PC-3 (cell line): ENCODE measurements at regions of chr13 and their contacts with region 1.

Region 1: GRCh38 chr13:96086736-96087135 is 3.2 kb upstream of the HS6ST3 start:
- DNase-seq: no peak
- ATAC-seq: no peak
- H3K4me3 ChIP-seq: no peak overlapping the region
- H3K27ac ChIP-seq: no peak overlapping the region
- H3K4me1 ChIP-seq: 0 out of 2 replicates have a peak, but pooled peaks cover 4% of the 10 kb centered on the region
- H3K27me3 ChIP-seq: peaks cover 39% of the 10 kb centered on the region
- CTCF ChIP-seq: no peak

Region 2: GRCh38 chr13:95627590-95627989 is 459.1 kb before region 1 on chr13:
- CTCF ChIA-PET with region 1: no interaction called
- POLR2A ChIA-PET with region 1: no interaction called
- intact Hi-C with region 1: no loop called
- DNase-seq: no peak
- ATAC-seq: no peak
- H3K4me3 ChIP-seq: no peak overlapping the region
- H3K27ac ChIP-seq: no peak overlapping the region
- H3K4me1 ChIP-seq: no peaks in the 10 kb centered on the region
- H3K27me3 ChIP-seq: no peaks in the 10 kb centered on the region
- CTCF ChIP-seq: no peak

Region 3: DNA sequence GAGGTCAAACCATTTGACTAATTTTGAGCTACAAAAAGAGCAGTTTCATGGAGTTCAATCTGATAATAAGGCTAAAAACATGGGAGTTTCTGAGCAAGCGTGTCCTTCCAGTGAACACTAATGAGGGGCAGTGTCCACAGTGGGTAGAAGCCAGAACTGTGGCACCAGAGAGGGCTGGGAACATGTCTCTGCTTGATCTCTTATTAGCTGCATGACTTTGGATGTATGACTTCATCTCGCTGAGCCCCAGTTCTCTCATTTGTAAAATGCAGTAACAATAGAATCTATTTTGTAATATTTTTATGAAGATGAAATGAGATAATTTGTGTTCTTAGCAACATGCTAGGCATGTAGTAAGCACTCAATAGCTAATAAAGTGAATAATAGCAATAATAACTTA is 73.0 kb after region 1 on chr13:
- CTCF ChIA-PET with region 1: no interaction called
- POLR2A ChIA-PET with region 1: no interaction called
- intact Hi-C with region 1: no loop called
- DNase-seq: no peak
- ATAC-seq: no peak
- H3K4me3 ChIP-seq: no peak overlapping the region
- H3K27ac ChIP-seq: no peak overlapping the region
- H3K4me1 ChIP-seq: no peaks in the 10 kb centered on the region
- H3K27me3 ChIP-seq: peaks cover 41% of the 10 kb centered on the region
- CTCF ChIP-seq: no peak

Region 4: DNA sequence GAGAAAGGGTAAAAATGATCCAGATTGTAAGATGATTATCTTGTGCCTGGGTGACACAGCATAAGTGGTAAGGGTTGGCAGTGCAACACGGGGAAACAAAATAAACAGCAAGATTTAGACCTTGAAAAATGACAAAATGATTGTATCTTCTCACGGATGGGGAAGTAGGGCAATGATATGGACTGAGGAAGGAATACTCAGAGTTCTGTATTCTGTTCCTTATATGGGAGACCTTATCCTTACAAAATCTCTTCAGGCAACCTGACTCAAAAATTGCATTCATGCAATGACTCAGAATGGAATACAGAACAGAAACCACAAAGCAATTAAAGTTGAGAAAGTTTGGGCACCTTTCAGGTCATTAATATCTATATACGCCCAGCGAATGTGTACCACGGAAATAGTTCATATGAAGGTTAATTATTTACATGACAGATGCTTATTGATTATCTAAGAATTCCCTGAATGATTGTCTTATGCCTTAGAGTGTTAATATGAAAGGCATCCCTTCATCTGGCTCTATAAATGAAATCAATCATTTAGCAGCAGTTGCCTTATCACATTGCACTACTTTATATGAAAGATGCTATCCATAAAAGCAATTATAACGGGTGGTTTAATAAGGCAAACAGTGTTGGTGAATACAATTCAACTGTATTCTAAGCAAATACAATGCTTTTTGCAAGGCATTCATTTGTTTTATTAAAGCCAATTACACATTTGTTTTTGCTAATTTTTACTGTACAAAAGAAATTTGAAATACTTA is 152.3 kb after region 1 on chr13:
- CTCF ChIA-PET with region 1: no interaction called
- POLR2A ChIA-PET with region 1: interaction called, 10 read pairs
- intact Hi-C with region 1: no loop called
- DNase-seq: peak; percentile 47
- ATAC-seq: no peak
- H3K4me3 ChIP-seq: no peak overlapping the region
- H3K27ac ChIP-seq: peak overlapping the region; percentile 26
- H3K4me1 ChIP-seq: peaks cover 7% of the 10 kb centered on the region; the same call in 1 of the 2 replicates
- H3K27me3 ChIP-seq: no peaks in the 10 kb centered on the region
- CTCF ChIP-seq: no peak

Region 5: GRCh38 chr13:96527497-96527896 is 440.8 kb after region 1 on chr13:
- CTCF ChIA-PET with region 1: no interaction called
- POLR2A ChIA-PET with region 1: no interaction called
- intact Hi-C with region 1: no loop called
- DNase-seq: no peak
- ATAC-seq: no peak
- H3K4me3 ChIP-seq: no peak overlapping the region
- H3K27ac ChIP-seq: no peak overlapping the region
- H3K4me1 ChIP-seq: no peaks in the 10 kb centered on the region
- H3K27me3 ChIP-seq: no peaks in the 10 kb centered on the region
- CTCF ChIP-seq: no peak